Heart right ventricle (tissue), 16 donors: ENCODE measurements at regions of chr10 and their contacts with region 1.

Region 1: GRCh38 chr10:131722525-131723264 is 178.1 kb upstream of the PPP2R2D start:
- DNase-seq: no peak
- ATAC-seq: no peak
- H3K4me3 ChIP-seq: no peak overlapping the region
- H3K27ac ChIP-seq: no peak overlapping the region
- H3K4me1 ChIP-seq: peaks cover 0 to 14% (median 6%) of the 10 kb centered on the region in 9 donors
- H3K27me3 ChIP-seq: peaks cover 0 to 24% (median 3%) of the 10 kb centered on the region in 7 donors
- CTCF ChIP-seq: no peak

Region 2: GRCh38 chr10:131461093-131461492 is 261.6 kb before region 1 on chr10:
- intact Hi-C with region 1: no loop called
- DNase-seq: no peak
- ATAC-seq: no peak
- H3K4me3 ChIP-seq: no peak overlapping the region
- H3K27ac ChIP-seq: no peak overlapping the region
- H3K4me1 ChIP-seq: no peaks in the 10 kb centered on the region
- H3K27me3 ChIP-seq: peaks cover 0 to 68% (median 36%) of the 10 kb centered on the region in 7 donors
- CTCF ChIP-seq: no peak

Region 3: GRCh38 chr10:131668903-131669302 is 53.8 kb before region 1 on chr10:
- intact Hi-C with region 1: loop called in 1 of 10 experiments (anchors 1 kb)
- DNase-seq: no peak
- ATAC-seq: no peak
- H3K4me3 ChIP-seq: no peak overlapping the region
- H3K27ac ChIP-seq: no peak overlapping the region
- H3K4me1 ChIP-seq: no peaks in the 10 kb centered on the region
- H3K27me3 ChIP-seq: peaks cover 0 to 7% (median 0%) of the 10 kb centered on the region in 7 donors
- CTCF ChIP-seq: no peak